ENCODE measurements at regions of chr12 and their contacts with region 1.

Region 1: GRCh38 chr12:56461235-56462159 is 6.9 kb upstream of the SPRYD4 start:
- DNase-seq: peak; percentile 49
- ATAC-seq: no peak
- H3K4me3 ChIP-seq: no peak overlapping the region
- H3K27ac ChIP-seq: no peak overlapping the region
- H3K4me1 ChIP-seq: 0 out of 2 replicates have a peak, but pooled peaks cover 2% of the 10 kb centered on the region
- H3K27me3 ChIP-seq: no peaks in the 10 kb centered on the region
- CTCF ChIP-seq: no peak
- POLR2A ChIP-seq: no peak
- RAD21 ChIP-seq: no peak

Region 2: GRCh38 chr12:56315622-56316473 is 145.6 kb before region 1 on chr12 and contains the start of gene CNPY2:
- CTCF ChIA-PET with region 1: interaction called, 5 read pairs
- POLR2A ChIA-PET with region 1: no interaction called
- dilution Hi-C with region 1: no loop called
- in situ Hi-C with region 1: no loop called
- intact Hi-C with region 1: loop called (anchors 5 kb)
- DNase-seq: peak; percentile 96
- ATAC-seq: peak; percentile 96
- H3K4me3 ChIP-seq: peak within 1 kb of the TSS; percentile 77
- H3K27ac ChIP-seq: peak within 1 kb of the TSS; percentile 97
- H3K4me1 ChIP-seq: peaks cover 4% of the 10 kb centered on the region
- H3K27me3 ChIP-seq: no peaks in the 10 kb centered on the region
- CTCF ChIP-seq: 0 out of 2 replicates have a peak, but pooled peaks have one; percentile 9
- POLR2A ChIP-seq: peak; percentile 80
- RAD21 ChIP-seq: no peak
- total RNA-seq, gene CNPY2: 65.2 and 76.7 TPM in 2 replicates

Region 3: GRCh38 chr12:56377310-56377988 is 84.0 kb before region 1 on chr12:
- CTCF ChIA-PET with region 1: no interaction called
- POLR2A ChIA-PET with region 1: no interaction called
- dilution Hi-C with region 1: no loop called
- in situ Hi-C with region 1: no loop called
- intact Hi-C with region 1: loop called (anchors 5 kb)
- DNase-seq: peak; percentile 62
- ATAC-seq: peak; percentile 57; the same call in 1 of the 2 replicates
- H3K4me3 ChIP-seq: no peak overlapping the region
- H3K27ac ChIP-seq: no peak overlapping the region
- H3K4me1 ChIP-seq: no peaks in the 10 kb centered on the region
- H3K27me3 ChIP-seq: peaks cover 3% of the 10 kb centered on the region
- CTCF ChIP-seq: peak; percentile 52
- POLR2A ChIP-seq: no peak
- RAD21 ChIP-seq: peak; percentile 57

Region 4: DNA sequence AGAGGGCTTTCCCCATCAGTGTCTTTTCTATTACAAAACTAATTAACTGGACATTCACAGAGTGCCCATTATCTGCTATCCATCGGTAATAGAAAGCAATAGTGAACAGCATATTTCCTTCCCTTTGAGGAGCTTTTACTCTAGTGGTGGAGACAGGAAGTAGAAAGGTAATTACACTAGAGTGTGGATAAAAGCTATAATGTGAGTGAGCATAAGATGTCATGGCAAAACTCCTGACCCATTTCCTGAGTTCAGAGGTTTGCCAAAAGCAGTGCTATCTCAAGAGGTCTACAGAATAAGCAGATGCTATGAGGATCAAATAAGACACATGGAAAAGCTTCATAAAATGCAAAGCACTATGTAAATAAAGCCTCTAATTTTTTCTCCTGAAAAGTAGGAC is 36.3 kb before region 1 on chr12:
- CTCF ChIA-PET with region 1: no interaction called
- POLR2A ChIA-PET with region 1: no interaction called
- dilution Hi-C with region 1: no loop called
- in situ Hi-C with region 1: no loop called
- intact Hi-C with region 1: no loop called
- DNase-seq: no peak
- ATAC-seq: no peak
- H3K4me3 ChIP-seq: no peak overlapping the region
- H3K27ac ChIP-seq: no peak overlapping the region
- H3K4me1 ChIP-seq: no peaks in the 10 kb centered on the region
- H3K27me3 ChIP-seq: no peaks in the 10 kb centered on the region
- CTCF ChIP-seq: no peak
- POLR2A ChIP-seq: no peak
- RAD21 ChIP-seq: no peak

Measured in IMR-90 (cell line).